Posterior vena cava (tissue), 2 donors: ENCODE measurements at regions of chr11 and their contacts with region 1.

Region 1: GRCh38 chr11:72652873-72653630 is 21.2 kb downstream of the PDE2A start:
- DNase-seq: no peak

Region 2: GRCh38 chr11:72483412-72484186 is 169.5 kb before region 1 on chr11:
- intact Hi-C with region 1: loop called (anchors 10 kb)
- DNase-seq: no peak

Region 3: GRCh38 chr11:72676861-72677341 is 23.8 kb after region 1 on chr11:
- intact Hi-C with region 1: loop called in 1 of 2 experiments (anchors 1 kb)
- DNase-seq: peak; percentile 90